ENCODE measurements at regions of chr12 and their contacts with region 1.

Region 1: GRCh38 chr12:107093417-107094182 is at the start of gene CRY1:
- DNase-seq: peak; percentile 90 to 99 (median 95)

Region 2: GRCh38 chr12:106986625-106987430 is 106.8 kb before region 1 on chr12 and contains the start of gene MTERF2:
- intact Hi-C with region 1: loop called (anchors 2 kb)
- DNase-seq: peak; percentile 87 to 99 (median 94)

Region 3: DNA sequence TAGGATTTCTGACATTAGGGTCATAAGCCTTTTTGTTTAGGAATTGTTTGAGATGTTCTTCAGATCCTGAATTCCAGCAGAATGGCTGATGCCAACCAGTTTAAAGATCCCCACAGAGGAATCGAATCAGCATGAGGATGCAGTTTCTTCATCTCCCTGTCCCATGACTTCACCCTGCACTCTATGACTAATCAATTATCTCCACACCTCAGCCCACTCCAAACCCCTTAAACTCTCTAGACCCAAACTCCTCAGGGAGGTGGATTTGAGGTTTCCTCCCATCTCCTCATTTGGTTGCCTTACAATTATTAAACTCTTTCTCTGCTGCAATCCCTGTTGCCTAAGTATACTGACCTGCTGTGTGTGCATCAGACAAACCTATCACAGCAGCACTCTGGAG is 86.3 kb after region 1 on chr12:
- intact Hi-C with region 1: no loop called
- DNase-seq: no peak

Measured in posterior cingulate gyrus (tissue), 11 donors.